Activated CD4-positive, alpha-beta T cell treated with anti-CD3 and anti-CD28 coated beads for 36 hours (primary cell): ENCODE measurements at regions of chr15 and their contacts with region 1.

Region 1: DNA sequence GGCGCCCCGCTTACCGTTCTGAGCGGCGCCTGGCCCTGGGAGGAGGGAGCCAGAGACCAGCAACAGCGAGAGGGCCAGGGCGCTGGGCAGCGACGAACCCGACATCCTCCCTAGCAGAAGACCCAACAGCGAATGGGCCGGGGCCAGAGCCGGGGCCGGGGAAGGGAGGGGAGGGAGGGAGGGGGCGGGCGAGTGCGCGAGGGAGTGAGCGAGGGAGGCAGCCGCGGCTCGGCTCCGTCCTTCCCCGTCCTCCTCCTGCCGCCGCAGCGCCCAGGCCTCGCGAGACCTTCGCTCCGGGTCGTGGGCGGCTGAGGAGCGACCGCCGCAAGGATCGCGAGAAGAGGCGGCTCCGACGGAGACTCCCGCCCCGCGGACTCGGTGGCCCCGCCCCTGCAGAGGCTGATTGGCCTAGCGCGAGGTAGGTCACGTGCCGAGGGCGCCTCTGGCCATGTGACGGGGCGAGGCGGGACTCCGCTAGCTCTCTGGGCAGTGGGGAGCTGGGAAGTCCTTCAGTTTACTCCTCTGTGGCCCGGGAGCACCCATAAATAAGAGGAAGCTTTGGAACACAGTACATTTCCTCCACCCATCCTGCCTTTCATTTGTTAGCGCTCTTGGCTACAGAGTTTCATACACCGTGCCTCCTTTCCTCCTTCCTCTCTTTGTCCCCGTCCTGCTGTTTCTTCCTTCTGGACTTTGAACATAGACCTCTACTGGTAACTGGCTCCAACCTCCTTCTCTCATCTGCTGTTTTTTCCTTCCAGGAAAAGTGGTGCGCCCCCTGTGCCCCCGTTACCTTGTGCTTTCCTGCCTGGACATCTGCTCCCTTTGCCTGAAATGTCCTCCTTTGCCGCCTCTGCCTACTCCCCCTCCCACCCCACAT is at the start of gene NPTN:
- DNase-seq: peak; percentile 99
- ATAC-seq: peak; percentile 91
- H3K4me3 Mint-ChIP-seq: peak within 1 kb of the TSS; percentile 86
- H3K27ac Mint-ChIP-seq: peak within 1 kb of the TSS; percentile 71
- H3K4me1 Mint-ChIP-seq: peaks cover 52% of the 10 kb centered on the region
- H3K27me3 Mint-ChIP-seq: peaks cover 14% of the 10 kb centered on the region
- total RNA-seq, gene NPTN: 43.5 to 73.4 TPM

Region 2: GRCh38 chr15:72117486-72118399 is 1515.6 kb before region 1 on chr15 and contains the start of gene MYO9A:
- CTCF ChIA-PET with region 1: no interaction called
- POLR2A ChIA-PET with region 1: no interaction called
- intact Hi-C with region 1: loop called in 1 of 2 experiments (anchors 2 kb)
- DNase-seq: peak; percentile 100
- ATAC-seq: peak; percentile 73
- H3K4me3 Mint-ChIP-seq: peak within 1 kb of the TSS; percentile 98
- H3K27ac Mint-ChIP-seq: peak within 1 kb of the TSS; percentile 96
- H3K4me1 Mint-ChIP-seq: peaks cover 40% of the 10 kb centered on the region
- H3K27me3 Mint-ChIP-seq: no peaks in the 10 kb centered on the region
- total RNA-seq, gene MYO9A: 19.0 to 20.3 TPM

Region 3: GRCh38 chr15:73240866-73241499 is 392.4 kb before region 1 on chr15:
- CTCF ChIA-PET with region 1: interaction called, 5 read pairs
- POLR2A ChIA-PET with region 1: no interaction called
- intact Hi-C with region 1: loop called in 1 of 2 experiments (anchors 5 kb)
- DNase-seq: peak; percentile 84
- ATAC-seq: no peak
- H3K4me3 Mint-ChIP-seq: no peak overlapping the region
- H3K27ac Mint-ChIP-seq: no peak overlapping the region
- H3K4me1 Mint-ChIP-seq: no peaks in the 10 kb centered on the region
- H3K27me3 Mint-ChIP-seq: no peaks in the 10 kb centered on the region

Region 4: DNA sequence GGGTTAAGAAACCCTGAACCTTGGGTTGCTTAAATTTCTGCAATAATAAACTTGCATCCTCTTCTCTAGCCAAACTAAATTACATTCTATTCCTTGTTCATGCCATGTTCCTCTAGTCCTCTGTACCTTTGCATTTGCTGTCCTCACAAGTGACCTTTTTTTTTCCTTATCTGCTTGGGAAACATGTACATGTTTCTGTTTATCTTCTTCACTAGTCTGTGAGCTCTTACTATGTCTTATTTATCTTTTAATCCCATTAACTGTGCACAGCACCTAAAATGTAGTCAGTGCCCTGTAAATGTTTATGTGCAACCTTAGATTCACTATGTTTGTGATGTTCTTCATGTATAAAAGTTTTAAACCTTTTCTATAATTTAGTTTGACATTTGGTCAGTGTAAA is 128.5 kb before region 1 on chr15:
- CTCF ChIA-PET with region 1: no interaction called
- POLR2A ChIA-PET with region 1: no interaction called
- intact Hi-C with region 1: no loop called
- DNase-seq: no peak
- ATAC-seq: no peak
- H3K4me3 Mint-ChIP-seq: no peak overlapping the region
- H3K27ac Mint-ChIP-seq: no peak overlapping the region
- H3K4me1 Mint-ChIP-seq: no peaks in the 10 kb centered on the region
- H3K27me3 Mint-ChIP-seq: peaks cover 2% of the 10 kb centered on the region

Region 5: GRCh38 chr15:73589766-73590165 is 43.6 kb before region 1 on chr15:
- CTCF ChIA-PET with region 1: interaction called, 11 read pairs
- POLR2A ChIA-PET with region 1: no interaction called
- intact Hi-C with region 1: no loop called
- DNase-seq: no peak
- ATAC-seq: no peak
- H3K4me3 Mint-ChIP-seq: no peak overlapping the region
- H3K27ac Mint-ChIP-seq: no peak overlapping the region
- H3K4me1 Mint-ChIP-seq: peaks cover 12% of the 10 kb centered on the region
- H3K27me3 Mint-ChIP-seq: no peaks in the 10 kb centered on the region

Region 6: DNA sequence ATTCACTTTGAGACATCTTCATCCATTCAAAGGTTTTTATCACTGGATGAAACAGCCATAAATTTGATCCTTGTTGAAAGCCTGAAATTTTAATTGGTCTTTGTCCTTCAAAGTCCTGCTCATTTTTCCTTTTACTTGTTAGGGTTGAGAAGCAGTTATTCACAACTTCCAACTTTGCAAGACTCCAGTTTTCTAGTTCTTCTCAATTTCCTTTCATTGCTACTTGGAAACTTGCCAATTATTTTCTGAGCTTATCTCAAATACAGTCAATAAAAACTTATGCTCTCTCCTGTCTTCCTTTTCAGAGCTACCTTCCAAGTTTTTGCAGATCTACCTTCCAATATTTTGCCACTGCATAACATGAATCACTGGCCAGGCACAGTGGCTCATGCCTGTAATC is 27.1 kb after region 1 on chr15:
- CTCF ChIA-PET with region 1: interaction called, 13 read pairs
- POLR2A ChIA-PET with region 1: no interaction called
- intact Hi-C with region 1: no loop called
- DNase-seq: no peak
- ATAC-seq: no peak
- H3K4me3 Mint-ChIP-seq: no peak overlapping the region
- H3K27ac Mint-ChIP-seq: no peak overlapping the region
- H3K4me1 Mint-ChIP-seq: peaks cover 3% of the 10 kb centered on the region
- H3K27me3 Mint-ChIP-seq: peaks cover 28% of the 10 kb centered on the region

Region 7: DNA sequence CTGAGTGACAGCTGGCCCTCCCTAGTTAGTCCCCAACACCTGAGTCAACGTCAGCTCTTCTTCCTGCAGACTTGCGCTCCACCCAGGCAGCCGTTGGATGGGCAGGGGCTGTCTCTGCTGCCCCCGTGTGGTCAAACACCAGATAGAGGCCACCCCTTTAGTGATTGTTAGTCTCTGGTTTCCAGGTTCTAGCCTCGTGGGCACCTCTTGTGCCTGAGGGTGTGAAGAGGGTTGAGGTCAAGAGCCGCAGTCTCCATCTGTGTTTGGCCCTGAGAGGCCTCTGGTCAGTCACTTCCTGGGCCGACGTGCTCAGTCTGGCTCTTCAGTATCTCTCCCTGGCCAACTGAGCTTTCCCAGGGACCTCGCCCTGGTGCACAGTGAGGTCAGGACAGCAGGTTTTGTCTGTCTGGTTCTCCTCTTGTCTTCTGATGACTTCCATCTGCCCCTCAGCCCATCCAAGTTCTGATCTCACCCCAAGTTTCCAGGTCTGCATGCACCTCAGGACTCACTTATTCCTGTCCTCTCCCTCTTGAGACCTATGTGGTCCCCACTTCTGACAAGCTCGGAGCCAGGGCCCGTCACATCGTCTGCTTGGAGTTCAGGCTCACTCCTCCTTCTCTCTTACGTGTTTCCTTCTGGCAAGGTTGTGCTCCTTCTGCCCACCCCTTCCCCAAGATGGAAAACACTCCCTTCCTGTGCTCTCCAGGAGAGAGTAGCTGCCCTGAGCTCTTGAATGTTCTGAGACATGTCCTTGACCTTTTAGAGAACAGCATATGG is 71.7 kb after region 1 on chr15:
- CTCF ChIA-PET with region 1: interaction called, 145 read pairs
- POLR2A ChIA-PET with region 1: interaction called, 4 read pairs
- intact Hi-C with region 1: loop called (anchors 1 kb)
- DNase-seq: peak; percentile 83
- ATAC-seq: peak; percentile 85
- H3K4me3 Mint-ChIP-seq: no peak overlapping the region
- H3K27ac Mint-ChIP-seq: no peak overlapping the region
- H3K4me1 Mint-ChIP-seq: no peaks in the 10 kb centered on the region
- H3K27me3 Mint-ChIP-seq: peaks cover 3% of the 10 kb centered on the region

Region 8: GRCh38 chr15:73753250-73754130 is 120.1 kb after region 1 on chr15 and contains the start of gene INSYN1:
- CTCF ChIA-PET with region 1: no interaction called
- POLR2A ChIA-PET with region 1: no interaction called
- intact Hi-C with region 1: no loop called
- DNase-seq: no peak
- ATAC-seq: no peak
- H3K4me3 Mint-ChIP-seq: no peak within 1 kb of the TSS
- H3K27ac Mint-ChIP-seq: no peak within 1 kb of the TSS
- H3K4me1 Mint-ChIP-seq: peaks cover 4% of the 10 kb centered on the region
- H3K27me3 Mint-ChIP-seq: peaks cover 35% of the 10 kb centered on the region
- total RNA-seq, gene INSYN1: not detected